GM10248 (cell line): ENCODE measurements at regions of chr19 and their contacts with region 1.

Region 1: GRCh38 chr19:2648528-2648937 is 54.0 kb downstream of the GNG7 start:
- DNase-seq: peak; percentile 85
- CTCF ChIP-seq: peak; percentile 86

Region 2: DNA sequence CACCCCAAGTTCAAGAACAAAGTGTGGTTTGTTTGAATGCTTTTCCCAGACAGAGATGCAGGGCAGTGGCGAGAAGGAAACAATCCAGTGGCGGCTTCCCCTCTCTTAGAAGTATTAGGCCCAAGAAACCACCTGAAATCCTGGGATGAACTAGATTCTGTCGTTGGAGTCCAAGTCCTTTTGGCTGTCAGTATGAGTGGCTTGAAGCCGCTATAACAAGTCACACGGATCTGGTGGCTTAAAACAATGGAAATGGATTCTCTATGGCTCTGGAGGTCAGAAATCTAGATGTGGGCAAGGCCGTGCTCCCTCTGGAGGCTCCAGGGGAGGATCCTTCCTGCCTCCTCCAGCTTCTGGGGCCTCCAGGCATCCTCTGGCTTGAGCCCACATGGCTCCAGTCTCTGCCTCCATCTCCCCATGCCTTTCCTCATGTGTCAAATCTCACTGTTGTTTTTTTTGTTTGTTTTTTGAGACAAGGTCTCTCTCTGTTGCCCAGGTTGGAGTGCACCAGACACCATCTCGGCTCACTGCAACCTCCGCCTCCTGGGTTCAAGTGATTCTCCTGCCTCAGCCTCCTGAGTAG is 43.7 kb before region 1 on chr19:
- CTCF ChIA-PET with region 1: no interaction called
- POLR2A ChIA-PET with region 1: no interaction called
- DNase-seq: no peak
- CTCF ChIP-seq: no peak

Region 3: DNA sequence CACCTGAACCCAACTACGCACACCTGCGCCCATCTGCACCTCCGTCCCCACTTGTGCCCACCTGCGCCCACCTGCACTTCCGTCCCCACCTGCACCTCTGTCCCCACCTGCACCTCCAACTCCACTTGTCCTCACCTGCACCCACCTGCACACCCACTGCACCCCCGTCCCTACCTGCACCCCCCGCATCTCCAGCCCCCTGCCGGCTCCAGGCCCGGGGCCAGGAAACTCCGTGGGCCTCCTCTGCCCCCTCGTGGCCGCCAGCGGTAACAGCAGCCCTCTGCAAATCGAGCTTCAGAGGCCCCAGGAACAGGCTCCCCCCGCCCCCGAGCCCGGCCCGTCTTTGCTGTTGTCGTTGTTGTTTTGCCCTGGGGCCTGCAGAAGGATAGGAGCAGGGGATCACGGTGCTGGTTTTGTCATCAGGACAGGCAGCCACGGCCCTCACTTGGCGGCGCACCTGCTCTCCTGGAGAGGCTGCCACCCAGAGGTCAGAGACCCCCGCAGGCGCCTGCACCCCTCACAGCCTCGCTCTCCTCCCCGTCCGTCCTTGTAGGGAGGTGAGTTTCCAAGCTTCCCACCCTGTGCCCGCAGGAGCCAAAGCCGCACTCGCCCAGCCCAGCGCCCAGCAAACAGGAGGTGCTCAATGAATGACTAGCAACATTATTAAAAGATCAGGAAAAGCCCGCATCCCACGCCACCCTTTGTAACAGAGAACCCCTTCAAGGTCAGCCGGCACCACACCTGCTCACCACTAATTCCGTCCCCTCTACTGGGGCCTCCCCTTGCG is 11.4 kb before region 1 on chr19:
- CTCF ChIA-PET with region 1: interaction called, 30 read pairs
- POLR2A ChIA-PET with region 1: interaction called, 3 read pairs
- DNase-seq: peak; percentile 91
- CTCF ChIP-seq: peak; percentile 87

Region 4: GRCh38 chr19:2670262-2670661 is 21.7 kb after region 1 on chr19:
- CTCF ChIA-PET with region 1: interaction called, 10 read pairs
- POLR2A ChIA-PET with region 1: no interaction called
- DNase-seq: no peak
- CTCF ChIP-seq: no peak

Region 5: DNA sequence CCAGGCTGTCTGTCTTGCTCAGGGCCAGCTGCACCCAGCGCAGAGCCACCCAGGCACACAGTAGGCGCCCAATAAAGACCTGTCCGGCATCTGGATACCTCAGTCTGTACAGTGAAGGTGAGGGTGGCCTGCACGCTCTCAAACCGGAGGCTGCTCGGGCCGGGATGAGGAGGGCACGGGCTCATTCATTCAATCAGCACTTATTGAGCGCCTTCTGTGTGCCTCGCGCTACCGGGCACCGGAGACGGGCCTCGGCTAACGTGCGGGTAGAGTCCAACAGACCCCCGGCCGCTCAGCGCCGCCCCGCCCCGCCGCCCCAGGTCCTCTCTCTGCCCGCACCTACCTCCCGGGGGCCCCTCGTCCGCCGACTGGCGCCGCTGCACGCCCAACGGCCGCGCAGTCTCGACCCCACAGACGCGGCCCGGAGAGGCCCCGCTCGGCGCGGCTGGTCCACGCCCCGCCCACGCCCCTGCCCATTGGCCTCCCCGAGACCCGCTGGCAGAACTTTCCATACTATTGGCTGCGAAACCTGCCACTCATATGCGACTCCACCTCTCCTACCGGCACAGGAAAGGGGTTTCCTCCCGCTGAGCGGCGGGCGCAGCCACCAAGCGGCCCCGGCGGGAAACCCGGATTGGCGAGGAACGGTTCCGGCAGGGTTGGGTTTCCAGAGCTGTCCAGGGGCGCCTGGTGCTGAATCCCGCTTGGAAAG is 91.2 kb after region 1 on chr19 and contains the start of gene SLC39A3:
- CTCF ChIA-PET with region 1: interaction called, 88 read pairs
- POLR2A ChIA-PET with region 1: no interaction called
- DNase-seq: peak; percentile 100
- CTCF ChIP-seq: peak; percentile 3

Region 6: GRCh38 chr19:2782936-2783780 is 134.6 kb after region 1 on chr19 and contains the start of gene SGTA:
- CTCF ChIA-PET with region 1: interaction called, 11 read pairs
- POLR2A ChIA-PET with region 1: no interaction called
- DNase-seq: peak; percentile 98
- CTCF ChIP-seq: peak; percentile 33

Region 7: DNA sequence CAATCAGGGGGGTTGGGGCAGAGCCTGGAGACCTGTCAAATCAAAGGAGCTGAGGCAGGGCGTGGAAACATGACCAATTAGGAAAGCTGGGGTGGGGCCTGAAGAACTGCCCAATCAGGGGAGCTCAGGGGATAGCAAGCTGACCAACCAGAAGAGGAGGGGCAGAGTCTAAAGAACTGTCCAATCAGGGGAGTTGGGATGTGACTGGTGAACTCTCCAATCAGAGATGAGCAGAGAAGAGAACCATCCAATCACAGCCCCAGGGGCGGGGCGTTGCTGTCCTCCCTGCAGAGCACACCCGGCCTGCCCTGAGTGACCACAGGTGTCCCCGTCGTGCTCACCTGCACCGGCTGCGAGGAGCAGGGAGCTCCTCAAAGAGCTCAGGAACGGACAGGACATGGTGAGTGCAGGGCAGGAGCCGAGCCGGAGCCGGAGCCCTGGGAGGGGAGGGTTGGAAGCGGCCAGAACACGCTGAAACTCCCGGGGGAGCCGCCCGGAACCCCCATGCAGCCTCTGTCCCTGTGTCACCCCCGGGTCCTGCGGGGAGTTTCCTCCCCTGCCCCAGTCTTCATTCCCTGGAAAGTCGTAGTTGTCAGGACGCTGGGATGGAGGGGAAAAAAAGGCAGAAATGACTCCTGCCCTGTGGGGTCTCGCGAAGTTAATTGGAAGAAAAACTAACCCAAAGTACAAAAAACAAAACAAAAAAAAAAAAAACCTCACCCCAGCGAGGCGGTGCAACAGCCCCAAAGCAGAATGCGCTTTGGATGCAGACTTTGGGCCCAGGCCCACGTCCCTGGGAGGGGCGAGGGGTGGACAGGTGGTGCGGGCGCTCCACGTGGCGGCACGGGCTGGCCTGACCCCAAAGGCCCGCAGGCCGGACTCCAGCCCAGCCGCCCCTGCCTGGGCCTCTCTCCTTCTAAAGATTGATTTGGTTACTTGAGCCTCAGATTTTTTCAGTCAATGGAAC is 218.8 kb after region 1 on chr19 and contains the start of gene ZNF556:
- CTCF ChIA-PET with region 1: interaction called, 23 read pairs
- POLR2A ChIA-PET with region 1: no interaction called
- DNase-seq: no peak
- CTCF ChIP-seq: no peak